ENCODE measurements at regions of chr4 and their contacts with region 1.

Region 1: DNA sequence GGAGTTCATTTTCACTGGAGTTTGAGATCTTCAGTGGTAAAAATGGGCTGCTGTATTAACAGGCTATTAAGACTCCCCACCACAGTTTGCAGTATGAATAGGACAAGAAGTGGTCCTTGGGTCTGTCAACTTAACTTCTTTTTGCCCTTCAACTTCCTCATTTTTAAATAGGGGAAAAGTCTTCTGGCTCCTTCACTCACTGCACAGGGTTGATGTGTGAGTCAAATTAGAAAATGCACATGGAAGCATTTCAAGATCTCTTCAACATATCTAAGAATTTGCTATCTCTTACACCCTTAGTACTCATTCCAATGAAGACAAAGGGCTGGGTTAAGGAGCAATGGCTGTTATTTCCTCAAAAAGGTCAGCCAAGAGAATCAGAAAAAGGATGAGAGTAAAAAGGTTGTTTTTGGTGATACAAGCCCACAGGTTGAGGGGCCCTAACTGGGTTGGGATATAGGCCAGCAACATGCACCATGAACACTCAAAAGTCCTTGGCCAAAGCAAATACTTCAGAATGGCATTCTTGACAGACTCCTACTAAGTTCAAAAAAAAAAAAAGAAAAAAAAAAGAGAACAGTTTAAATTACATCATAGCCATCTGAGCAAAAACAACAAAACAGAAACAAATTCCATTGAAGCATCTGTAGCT is 13.4 kb downstream of the PDE5A start:
- DNase-seq: no peak
- H3K4me3 ChIP-seq: no peak overlapping the region
- H3K27ac ChIP-seq: peak overlapping the region in 3 of 4 donors; percentile 27 to 96 (median 96)
- H3K4me1 ChIP-seq: peaks cover 3 to 88% (median 52%) of the 10 kb centered on the region in 4 donors
- H3K27me3 ChIP-seq: no peaks in the 10 kb centered on the region
- CTCF ChIP-seq: no peak
- EP300 ChIP-seq: no peak
- POLR2A ChIP-seq: no peak

Region 2: GRCh38 chr4:119597377-119597776 is 17.8 kb before region 1 on chr4:
- intact Hi-C with region 1: loop called (anchors 2 kb)
- DNase-seq: no peak
- H3K4me3 ChIP-seq: no peak overlapping the region
- H3K27ac ChIP-seq: peak overlapping the region; percentile 30 to 66 (median 58)
- H3K4me1 ChIP-seq: peaks cover 0 to 46% (median 28%) of the 10 kb centered on the region in 4 donors
- H3K27me3 ChIP-seq: no peaks in the 10 kb centered on the region
- CTCF ChIP-seq: no peak
- EP300 ChIP-seq: no peak
- POLR2A ChIP-seq: no peak